ENCODE measurements at regions of chrX and their contacts with region 1.

Region 1: DNA sequence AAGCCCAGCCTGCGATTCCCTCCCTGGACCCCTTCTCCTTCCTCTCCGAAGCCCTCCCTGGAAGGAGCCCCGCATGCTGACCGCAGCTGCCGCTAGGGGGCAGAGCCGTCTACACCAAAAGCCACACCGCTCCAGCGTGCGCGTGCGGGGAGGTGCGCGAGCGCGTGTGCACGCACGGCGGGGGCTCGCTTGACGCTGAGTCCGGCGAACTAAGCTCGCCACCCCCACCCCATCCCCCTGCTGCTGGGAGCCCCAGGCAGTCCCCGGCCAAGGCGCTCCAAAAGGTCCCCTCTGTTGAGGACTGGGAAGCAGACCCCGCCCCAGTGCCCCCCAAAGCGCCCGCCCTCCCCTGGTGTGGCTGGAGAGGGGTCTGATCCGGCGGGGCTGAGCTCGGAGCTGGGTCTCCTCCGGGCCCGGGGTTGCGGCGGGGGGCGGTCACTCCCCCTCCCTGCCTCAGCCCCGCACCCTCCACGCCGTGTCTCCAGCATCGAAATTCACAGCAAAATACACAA is 11.0 kb upstream of the CCNQ start:
- DNase-seq: peak; percentile 64 to 80 (median 73)
- H3K4me3 ChIP-seq: peak overlapping the region in 5 of 7 experiments; percentile 31 to 75 (median 53)
- H3K27ac ChIP-seq: no peak overlapping the region
- H3K4me1 ChIP-seq: peaks cover 0 to 11% (median 1%) of the 10 kb centered on the region in 4 experiments
- H3K27me3 ChIP-seq: peaks cover 0 to 35% (median 5%) of the 10 kb centered on the region in 5 experiments

Region 2: GRCh38 chrX:153599192-153600031 is 10.6 kb before region 1 on chrX:
- CTCF ChIA-PET with region 1: interaction called, 14 read pairs
- POLR2A ChIA-PET with region 1: no interaction called
- DNase-seq: peak; percentile 81 to 90 (median 89)
- H3K4me3 ChIP-seq: peak overlapping the region; percentile 61 to 89 (median 75)
- H3K27ac ChIP-seq: peak overlapping the region in 1 of 2 experiments; percentile 58
- H3K4me1 ChIP-seq: peaks cover 6 to 21% (median 10%) of the 10 kb centered on the region in 4 experiments
- H3K27me3 ChIP-seq: peaks cover 0 to 25% (median 0%) of the 10 kb centered on the region in 5 experiments

Region 3: DNA sequence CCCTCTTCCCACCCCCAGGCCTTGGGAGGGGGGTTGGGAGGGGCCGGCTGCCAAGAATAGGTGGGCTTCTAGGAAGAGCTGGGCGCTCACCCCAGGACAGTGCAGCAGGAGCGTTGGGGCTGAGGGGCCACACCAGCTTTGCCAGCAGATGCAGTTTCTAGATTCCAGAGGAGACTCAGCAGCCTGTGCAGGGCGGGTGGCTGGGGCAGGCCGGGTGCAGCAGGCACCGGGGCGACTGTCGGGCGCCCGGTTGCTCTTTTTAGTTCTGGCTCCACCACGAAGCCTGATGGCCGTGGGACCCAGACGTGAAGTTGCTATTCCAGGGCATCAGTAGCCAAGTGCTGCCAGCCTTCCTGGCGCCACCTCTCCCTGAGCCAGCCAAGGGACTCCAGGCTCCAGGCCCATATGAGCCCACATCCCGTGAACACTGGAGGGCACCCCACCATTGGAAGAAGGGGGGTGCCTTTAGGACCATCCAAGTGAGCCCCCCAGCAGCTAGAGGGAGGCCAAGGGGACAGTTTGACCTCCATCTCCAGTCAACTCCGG is 190.3 kb after region 1 on chrX:
- CTCF ChIA-PET with region 1: no interaction called
- POLR2A ChIA-PET with region 1: no interaction called
- DNase-seq: no peak
- H3K4me3 ChIP-seq: no peak overlapping the region
- H3K27ac ChIP-seq: no peak overlapping the region
- H3K4me1 ChIP-seq: peaks cover 0 to 20% (median 17%) of the 10 kb centered on the region in 4 experiments
- H3K27me3 ChIP-seq: peaks cover 0 to 18% (median 0%) of the 10 kb centered on the region in 5 experiments

Measured in common myeloid progenitor, CD34-positive (primary cell).